Posterior vena cava (tissue), 2 donors: ENCODE measurements at regions of chr5 and their contacts with region 1.

Region 1: DNA sequence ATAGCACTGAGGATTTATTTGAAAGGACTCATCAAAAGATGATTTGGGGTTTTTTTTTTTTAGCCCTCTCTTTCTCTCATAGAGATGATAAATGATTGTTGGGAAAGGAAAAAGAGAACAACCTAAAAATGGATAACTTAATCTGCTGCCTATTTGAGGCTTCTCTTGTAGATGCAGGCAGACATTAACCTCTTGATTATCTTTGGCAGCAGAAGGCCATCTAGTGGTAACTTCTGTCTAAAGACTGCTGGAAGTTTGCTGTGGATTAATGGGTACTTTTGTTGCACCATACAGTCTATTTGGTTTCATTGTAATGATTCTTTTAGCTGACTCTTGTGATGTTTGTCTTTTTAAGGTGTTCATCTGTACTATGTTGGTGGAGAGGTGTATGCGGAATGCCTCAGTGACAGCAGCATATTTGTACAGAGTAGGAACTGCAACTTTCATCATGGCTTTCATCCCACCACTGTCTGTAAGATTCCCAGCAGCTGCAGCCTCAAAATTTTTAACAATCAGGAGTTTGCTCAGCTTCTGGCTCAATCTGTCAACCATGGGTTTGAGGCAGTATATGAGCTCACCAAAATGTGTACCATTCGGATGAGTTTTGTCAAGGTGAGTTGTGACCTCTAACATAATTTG is 18.8 kb downstream of the SMIM32 start:
- DNase-seq: no peak

Region 2: DNA sequence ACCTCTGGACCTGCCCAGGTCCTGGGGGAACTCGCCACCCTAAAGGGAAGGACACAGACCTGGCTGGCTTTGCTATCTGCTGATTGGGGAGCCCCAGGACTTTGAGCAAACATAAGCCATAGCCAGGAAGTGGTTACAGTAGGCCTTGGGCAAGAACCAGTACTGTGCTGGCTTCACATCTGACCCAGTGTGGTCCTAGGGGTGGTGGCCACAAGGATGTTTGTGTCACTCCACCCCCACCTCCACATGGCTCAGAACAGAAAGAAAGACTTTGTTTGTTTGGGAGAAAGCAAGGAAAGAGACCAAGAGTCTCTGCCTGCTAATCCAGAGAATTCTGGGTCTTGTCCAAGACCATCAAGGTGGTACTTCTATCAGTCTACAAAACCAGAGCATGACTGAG is 990.8 kb after region 1 on chr5:
- intact Hi-C with region 1: loop called in 1 of 2 experiments (anchors 5 kb)
- DNase-seq: no peak